ENCODE measurements at regions of chr17 and their contacts with region 1.

Region 1: DNA sequence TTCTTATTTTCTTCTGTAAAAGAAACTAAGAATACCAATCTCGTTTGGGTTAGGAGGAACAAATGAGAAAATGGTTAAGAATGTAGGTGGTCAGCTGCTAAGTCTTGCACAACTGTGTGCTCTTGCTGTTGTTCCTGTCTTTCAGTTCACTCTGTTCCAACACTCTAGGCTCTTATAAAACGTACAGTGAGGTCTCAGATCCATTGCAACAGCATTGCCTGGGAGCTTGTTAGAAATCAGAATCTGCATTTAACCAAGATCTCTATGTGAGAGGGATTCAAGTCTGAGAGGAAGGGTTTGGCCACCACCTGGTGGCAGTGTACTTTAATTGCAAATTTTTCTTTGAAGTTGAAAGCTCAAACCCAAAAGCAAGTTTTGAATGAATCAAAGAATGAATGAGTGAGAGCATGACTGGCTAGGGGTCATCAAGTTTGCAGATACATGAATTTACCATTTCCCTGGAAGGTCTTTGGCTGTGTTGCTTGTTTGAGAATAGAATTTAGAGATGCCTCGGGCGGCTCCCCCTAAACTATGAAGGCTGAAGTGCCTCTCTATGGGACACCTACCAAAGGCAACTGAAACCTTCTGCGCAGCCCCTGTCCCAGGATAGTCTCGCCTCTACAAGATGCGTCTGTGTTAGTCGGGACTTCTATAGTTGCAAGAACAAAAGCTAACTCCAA is 2.5 kb downstream of the ALOX15B start:
- DNase-seq: peak; percentile 91
- H3K4me3 Mint-ChIP-seq: peak overlapping the region; percentile 82
- H3K27ac Mint-ChIP-seq: peak overlapping the region; percentile 95
- H3K4me1 Mint-ChIP-seq: peaks cover 23% of the 10 kb centered on the region
- H3K27me3 Mint-ChIP-seq: no peaks in the 10 kb centered on the region
- CTCF ChIP-seq: peak; percentile 87

Region 2: GRCh38 chr17:7740481-7741001 is 300.8 kb before region 1 on chr17:
- CTCF ChIA-PET with region 1: interaction called, 3 read pairs
- POLR2A ChIA-PET with region 1: no interaction called
- intact Hi-C with region 1: loop called (anchors 1 kb)
- DNase-seq: no peak
- H3K4me3 Mint-ChIP-seq: peak overlapping the region; percentile 67
- H3K27ac Mint-ChIP-seq: peak overlapping the region; percentile 43
- H3K4me1 Mint-ChIP-seq: peaks cover 6% of the 10 kb centered on the region
- H3K27me3 Mint-ChIP-seq: peaks cover 56% of the 10 kb centered on the region
- CTCF ChIP-seq: no peak

Region 3: GRCh38 chr17:7755095-7755890 is 286.1 kb before region 1 on chr17:
- CTCF ChIA-PET with region 1: no interaction called
- POLR2A ChIA-PET with region 1: no interaction called
- intact Hi-C with region 1: no loop called
- DNase-seq: no peak
- H3K4me3 Mint-ChIP-seq: no peak overlapping the region
- H3K27ac Mint-ChIP-seq: no peak overlapping the region
- H3K4me1 Mint-ChIP-seq: peaks cover 14% of the 10 kb centered on the region
- H3K27me3 Mint-ChIP-seq: no peaks in the 10 kb centered on the region
- CTCF ChIP-seq: no peak

Region 4: GRCh38 chr17:7862692-7863437 is 178.5 kb before region 1 on chr17:
- CTCF ChIA-PET with region 1: interaction called, 18 read pairs
- POLR2A ChIA-PET with region 1: interaction called, 9 read pairs
- intact Hi-C with region 1: loop called (anchors 2 kb)
- DNase-seq: peak; percentile 62
- H3K4me3 Mint-ChIP-seq: no peak overlapping the region
- H3K27ac Mint-ChIP-seq: no peak overlapping the region
- H3K4me1 Mint-ChIP-seq: peaks cover 11% of the 10 kb centered on the region
- H3K27me3 Mint-ChIP-seq: no peaks in the 10 kb centered on the region
- CTCF ChIP-seq: peak; percentile 75

Region 5: GRCh38 chr17:7915611-7916382 is 125.6 kb before region 1 on chr17 and contains the start of gene RNF227:
- CTCF ChIA-PET with region 1: interaction called, 19 read pairs
- POLR2A ChIA-PET with region 1: interaction called, 19 read pairs
- intact Hi-C with region 1: loop called (anchors 1 kb)
- DNase-seq: peak; percentile 97
- H3K4me3 Mint-ChIP-seq: peak within 1 kb of the TSS; percentile 93
- H3K27ac Mint-ChIP-seq: peak within 1 kb of the TSS; percentile 95
- H3K4me1 Mint-ChIP-seq: peaks cover 26% of the 10 kb centered on the region
- H3K27me3 Mint-ChIP-seq: no peaks in the 10 kb centered on the region
- CTCF ChIP-seq: no peak
- total RNA-seq, gene RNF227: 5.6 and 7.4 TPM in 2 replicates

Region 6: GRCh38 chr17:8016632-8017478 is 24.5 kb before region 1 on chr17:
- CTCF ChIA-PET with region 1: interaction called, 167 read pairs
- POLR2A ChIA-PET with region 1: interaction called, 155 read pairs
- intact Hi-C with region 1: loop called (anchors 1 kb)
- DNase-seq: peak; percentile 87
- H3K4me3 Mint-ChIP-seq: peak overlapping the region; percentile 51
- H3K27ac Mint-ChIP-seq: peak overlapping the region; percentile 95
- H3K4me1 Mint-ChIP-seq: peaks cover 44% of the 10 kb centered on the region
- H3K27me3 Mint-ChIP-seq: no peaks in the 10 kb centered on the region
- CTCF ChIP-seq: peak; percentile 90

Region 7: DNA sequence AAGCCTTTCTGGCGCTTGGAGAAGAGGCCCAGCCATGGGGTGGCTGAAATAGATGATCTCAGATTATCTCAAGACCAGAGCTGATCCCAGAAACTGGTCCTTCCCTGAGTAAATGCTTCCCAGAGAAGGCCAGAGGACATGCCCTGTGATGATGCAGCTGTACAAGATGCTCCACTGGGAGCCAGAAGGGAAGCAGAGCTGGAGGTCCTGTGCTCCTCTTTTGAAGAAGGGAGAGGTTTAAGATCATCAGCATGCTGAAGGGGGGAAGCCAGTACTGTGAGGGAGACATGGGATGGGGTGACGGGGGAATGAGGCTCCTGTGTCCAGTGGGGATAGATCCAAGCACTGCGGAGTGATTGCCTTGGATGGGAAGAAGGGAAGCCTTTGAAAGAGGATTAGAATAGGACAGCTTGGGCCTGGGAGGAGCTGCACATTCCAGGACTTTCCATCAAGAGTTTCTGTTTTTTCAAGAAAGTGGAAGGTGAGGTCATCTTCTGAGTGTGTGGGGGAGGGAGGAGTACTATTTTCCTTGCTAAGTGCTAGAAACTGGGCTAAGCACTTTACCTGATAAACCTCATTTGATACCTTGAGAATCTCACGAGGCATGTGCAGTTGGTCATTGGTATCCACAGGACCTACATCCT is 18.9 kb before region 1 on chr17:
- CTCF ChIA-PET with region 1: interaction called, 167 read pairs
- POLR2A ChIA-PET with region 1: interaction called, 155 read pairs
- intact Hi-C with region 1: no loop called
- DNase-seq: no peak
- H3K4me3 Mint-ChIP-seq: no peak overlapping the region
- H3K27ac Mint-ChIP-seq: peak overlapping the region; percentile 44
- H3K4me1 Mint-ChIP-seq: peaks cover 48% of the 10 kb centered on the region
- H3K27me3 Mint-ChIP-seq: no peaks in the 10 kb centered on the region
- CTCF ChIP-seq: no peak

Region 8: DNA sequence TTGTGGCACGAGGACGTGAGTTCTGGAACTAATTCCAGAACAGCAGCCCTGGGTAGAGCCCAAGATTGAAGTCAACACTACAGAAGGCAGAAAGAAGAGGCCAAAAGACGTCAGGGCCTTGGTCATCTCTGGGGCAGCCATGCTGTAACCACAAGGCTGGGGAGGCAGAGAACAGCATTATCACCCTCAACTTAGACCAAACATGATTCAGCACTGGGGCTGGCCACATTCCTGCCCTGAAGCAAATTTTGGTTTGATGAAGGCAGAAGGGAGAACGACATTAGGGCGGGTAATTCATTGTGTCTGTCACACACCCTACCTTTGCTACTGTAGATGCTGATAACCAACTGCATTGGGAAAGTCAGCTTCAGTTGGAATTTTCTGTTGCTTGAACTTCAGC is 12.3 kb before region 1 on chr17:
- CTCF ChIA-PET with region 1: interaction called, 167 read pairs
- POLR2A ChIA-PET with region 1: interaction called, 15 read pairs
- intact Hi-C with region 1: no loop called
- DNase-seq: peak; percentile 60
- H3K4me3 Mint-ChIP-seq: no peak overlapping the region
- H3K27ac Mint-ChIP-seq: peak overlapping the region; percentile 68
- H3K4me1 Mint-ChIP-seq: peaks cover 32% of the 10 kb centered on the region
- H3K27me3 Mint-ChIP-seq: no peaks in the 10 kb centered on the region
- CTCF ChIP-seq: no peak

Measured in MCF 10A (cell line).